Dorsolateral prefrontal cortex (tissue), 120 donors: ENCODE measurements at regions of chr1 and their contacts with region 1.

Region 1: DNA sequence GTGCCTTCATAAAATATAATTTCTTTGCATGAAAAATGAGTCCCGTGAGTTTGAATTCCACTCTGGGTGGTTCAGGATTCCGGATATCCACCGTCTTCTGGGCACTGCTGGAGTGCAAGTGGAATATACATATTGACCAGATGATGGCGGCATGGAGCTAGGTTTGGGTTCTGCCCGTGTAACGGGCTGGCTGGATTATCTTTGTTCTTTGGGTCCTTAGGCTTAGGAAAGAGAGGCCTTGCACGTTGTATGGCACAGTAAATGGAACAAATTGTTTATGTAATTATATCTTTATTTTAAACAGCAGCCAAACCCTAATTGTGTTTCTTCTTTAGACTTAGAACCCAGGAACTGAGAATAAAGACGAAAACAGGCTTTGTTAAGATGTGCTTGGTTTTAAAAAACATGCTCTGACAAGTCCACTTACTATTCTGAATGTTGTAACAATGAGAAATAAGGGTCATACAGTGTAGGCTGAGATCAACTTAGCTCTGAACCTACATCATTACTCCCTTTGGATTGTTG is 13.5 kb upstream of the ACBD6 start:
- DNase-seq: peak in 7 of 10 donors; percentile 61 to 76 (median 72)
- H3K4me3 ChIP-seq: peak overlapping the region in 1 of 59 donors; percentile 33
- H3K27ac ChIP-seq: peak overlapping the region in 29 of 59 donors; percentile 1 to 72 (median 28)
- H3K27me3 ChIP-seq: no peaks in the 10 kb centered on the region
- CTCF ChIP-seq: peak; percentile 73 to 98 (median 88)

Region 2: DNA sequence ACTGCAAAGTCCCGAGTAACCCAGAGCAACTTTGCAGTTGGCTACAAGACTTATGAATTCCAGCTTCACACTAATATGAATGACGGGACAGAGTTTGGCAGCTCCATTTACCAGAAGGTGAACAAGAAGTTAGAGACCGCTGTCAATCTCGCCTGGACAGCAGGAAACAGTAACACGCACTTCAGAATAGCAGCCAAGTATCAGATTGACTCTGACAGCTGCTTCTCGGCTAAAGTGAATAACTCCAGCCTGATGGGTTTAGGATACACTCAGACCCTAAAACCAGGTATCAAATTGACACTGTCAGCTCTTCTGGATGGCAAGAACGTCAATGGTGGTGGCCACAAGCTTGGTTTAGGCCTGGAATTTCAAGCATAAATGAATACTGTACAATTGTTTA is 80.4 kb before region 1 on chr1:
- intact Hi-C with region 1: no loop called
- DNase-seq: no peak
- H3K4me3 ChIP-seq: no peak overlapping the region
- H3K27ac ChIP-seq: no peak overlapping the region
- H3K27me3 ChIP-seq: no peaks in the 10 kb centered on the region
- CTCF ChIP-seq: no peak

Region 3: DNA sequence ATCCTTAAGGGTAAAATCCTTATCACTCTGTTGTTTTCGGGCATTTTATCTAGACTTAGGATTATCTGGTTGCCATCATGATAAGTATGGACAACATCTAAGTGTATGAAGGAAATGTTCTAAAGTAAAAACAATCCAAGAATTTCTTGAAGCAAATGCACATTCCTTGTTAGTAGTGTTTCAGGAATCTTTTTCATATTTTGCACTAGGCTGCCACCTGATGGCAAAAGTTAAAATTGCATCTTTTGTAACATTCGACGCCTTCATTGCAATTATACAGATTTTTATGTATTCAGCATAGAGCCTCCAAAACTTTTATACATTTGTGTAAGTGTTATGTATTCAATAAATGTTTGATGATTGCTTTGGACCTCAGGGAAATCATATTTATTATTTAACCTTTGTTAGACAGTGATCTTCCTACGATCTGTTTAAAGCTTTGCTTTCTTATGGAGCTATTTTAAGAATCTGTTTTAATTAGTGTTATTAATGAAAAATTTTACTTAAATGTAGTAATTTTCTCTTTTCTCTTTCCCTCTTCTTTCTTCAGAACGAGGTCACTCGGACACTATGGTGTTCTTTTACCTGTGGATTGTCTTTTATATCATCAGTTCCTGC is 347.3 kb after region 1 on chr1:
- intact Hi-C with region 1: loop called (anchors 5 kb)
- DNase-seq: peak in 1 of 10 donors; percentile 16
- H3K4me3 ChIP-seq: no peak overlapping the region
- H3K27ac ChIP-seq: no peak overlapping the region
- H3K27me3 ChIP-seq: no peaks in the 10 kb centered on the region
- CTCF ChIP-seq: peak; percentile 80 to 99 (median 89)

Region 4: GRCh38 chr1:181166377-181167196 is 650.7 kb after region 1 on chr1:
- intact Hi-C with region 1: loop called in 1 of 2 experiments (anchors 5 kb)
- DNase-seq: peak in 8 of 10 donors; percentile 57 to 87 (median 65)
- H3K4me3 ChIP-seq: peak overlapping the region in 3 of 59 donors; percentile 3 to 22 (median 21)
- H3K27ac ChIP-seq: peak overlapping the region in 1 of 59 donors; percentile 13
- H3K27me3 ChIP-seq: no peaks in the 10 kb centered on the region
- CTCF ChIP-seq: peak; percentile 54 to 94 (median 87)